ENCODE measurements at regions of chr3 and their contacts with region 1.

Region 1: DNA sequence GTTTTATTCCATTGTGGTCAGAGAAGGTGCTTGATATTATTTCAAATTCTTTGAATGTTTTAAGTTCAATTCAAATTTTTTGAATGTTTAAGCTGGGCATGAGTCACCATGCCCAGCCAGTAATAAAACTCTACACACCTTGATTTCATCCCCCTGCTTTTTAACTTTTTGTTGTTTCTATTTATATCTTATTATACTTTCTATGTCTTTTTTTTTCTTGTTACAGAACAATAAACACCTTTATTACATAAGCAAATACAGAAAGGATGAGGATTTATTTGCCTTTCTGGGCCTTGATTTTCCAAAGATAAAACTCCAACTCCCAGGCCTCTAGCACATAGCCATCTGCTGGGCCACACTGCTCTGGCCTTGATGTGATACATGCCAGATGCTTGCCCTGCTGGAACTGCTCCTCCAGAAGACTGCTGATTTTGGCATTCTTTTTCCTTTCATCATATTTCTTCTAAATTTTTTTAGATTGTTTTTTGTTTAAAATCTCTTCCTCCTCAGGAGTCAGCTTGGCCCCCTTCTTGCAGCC is 14.0 kb downstream of the DNAH12 start:
- DNase-seq: peak; percentile 59
- ATAC-seq: peak; percentile 97
- H3K4me3 ChIP-seq: no peak overlapping the region
- H3K27ac ChIP-seq: peak overlapping the region; percentile 10; the same call in 1 of the 2 replicates
- H3K4me1 ChIP-seq: peaks cover 13% of the 10 kb centered on the region
- H3K27me3 ChIP-seq: no peaks in the 10 kb centered on the region
- CTCF ChIP-seq: no peak

Region 2: DNA sequence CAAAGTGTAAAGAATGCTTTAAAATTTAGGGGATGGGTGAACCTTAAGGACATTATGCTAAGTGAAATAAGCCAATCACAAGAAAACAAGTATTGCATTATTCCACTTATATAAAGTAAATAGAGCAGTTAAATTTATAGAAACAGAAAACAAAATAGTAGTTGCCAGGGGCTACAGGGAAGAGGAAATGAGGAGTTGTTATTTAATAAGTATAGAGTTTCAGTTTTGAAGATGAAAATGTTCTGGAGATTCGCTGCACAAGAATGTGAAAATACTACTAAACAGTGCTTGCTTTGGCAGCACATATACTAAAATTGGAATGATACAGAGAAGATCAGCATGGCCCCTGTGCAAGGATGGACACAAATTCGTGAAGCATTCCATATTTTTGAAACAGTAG is 18.0 kb before region 1 on chr3:
- CTCF ChIA-PET with region 1: no interaction called
- POLR2A ChIA-PET with region 1: no interaction called
- intact Hi-C with region 1: loop called (anchors 1 kb)
- DNase-seq: peak; percentile 48
- ATAC-seq: peak; percentile 86
- H3K4me3 ChIP-seq: peak overlapping the region; percentile 5; the same call in 1 of the 2 replicates
- H3K27ac ChIP-seq: no peak overlapping the region
- H3K4me1 ChIP-seq: peaks cover 12% of the 10 kb centered on the region; the same call in 1 of the 2 replicates
- H3K27me3 ChIP-seq: no peaks in the 10 kb centered on the region
- CTCF ChIP-seq: no peak

Region 3: GRCh38 chr3:57544181-57545125 is 14.3 kb after region 1 on chr3 and contains the start of gene DNAH12:
- CTCF ChIA-PET with region 1: no interaction called
- POLR2A ChIA-PET with region 1: no interaction called
- intact Hi-C with region 1: loop called (anchors 1 kb)
- DNase-seq: peak; percentile 41
- ATAC-seq: peak; percentile 78
- H3K4me3 ChIP-seq: peak within 1 kb of the TSS; percentile 54
- H3K27ac ChIP-seq: no peak within 1 kb of the TSS
- H3K4me1 ChIP-seq: peaks cover 9% of the 10 kb centered on the region
- H3K27me3 ChIP-seq: no peaks in the 10 kb centered on the region
- CTCF ChIP-seq: no peak
- total RNA-seq, gene DNAH12: 0.07 TPM in 1 of 2 replicates, not detected in the other

Region 4: DNA sequence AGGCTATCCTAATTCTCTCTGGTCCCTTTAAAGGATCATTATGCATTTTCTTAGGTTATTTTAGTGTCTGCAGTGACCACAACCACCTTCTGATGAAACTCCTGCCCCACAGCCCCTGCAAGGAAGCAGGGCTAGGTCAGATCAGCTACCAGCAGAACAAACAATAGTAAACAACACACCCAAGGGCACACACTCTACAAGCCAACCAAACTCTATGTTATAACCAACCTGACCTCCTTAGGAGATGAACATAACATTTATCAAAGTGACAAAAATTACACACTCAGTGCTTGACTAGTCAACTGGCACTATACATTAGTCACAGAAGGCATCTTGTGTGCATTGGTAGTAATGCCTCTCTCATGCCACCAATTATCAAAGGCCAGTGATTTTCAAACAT is 145.4 kb after region 1 on chr3:
- CTCF ChIA-PET with region 1: no interaction called
- POLR2A ChIA-PET with region 1: no interaction called
- intact Hi-C with region 1: no loop called
- DNase-seq: no peak
- ATAC-seq: no peak; the same call in 1 of the 2 replicates
- H3K4me3 ChIP-seq: no peak overlapping the region
- H3K27ac ChIP-seq: no peak overlapping the region
- H3K4me1 ChIP-seq: no peaks in the 10 kb centered on the region
- H3K27me3 ChIP-seq: no peaks in the 10 kb centered on the region
- CTCF ChIP-seq: no peak